Testis (tissue), 5 donors: ENCODE measurements at regions of chr7 and their contacts with region 1.

Region 1: DNA sequence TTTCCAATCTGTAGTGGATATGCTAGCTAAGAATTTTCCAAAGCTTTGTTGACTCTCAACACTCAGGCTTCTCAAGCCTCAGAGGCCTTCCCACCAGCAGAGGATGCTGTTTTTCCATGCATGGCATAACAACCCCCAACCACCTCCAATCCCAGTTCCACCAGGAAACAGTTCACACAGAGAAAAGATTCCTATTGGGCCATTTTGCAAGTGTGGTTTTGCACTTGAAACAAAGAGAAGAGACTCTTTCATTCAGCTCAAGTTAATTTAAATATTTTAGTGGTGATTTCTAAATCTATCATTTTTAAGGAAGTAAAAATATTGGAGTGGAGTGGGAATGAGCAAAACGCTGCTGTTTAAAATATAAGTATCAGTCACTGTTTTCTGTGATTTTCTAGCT is 105.6 kb upstream of the COL1A2 start:
- DNase-seq: peak; percentile 87
- H3K4me3 ChIP-seq: no peak overlapping the region
- H3K27ac ChIP-seq: no peak overlapping the region
- H3K4me1 ChIP-seq: no peaks in the 10 kb centered on the region
- H3K27me3 ChIP-seq: no peaks in the 10 kb centered on the region
- CTCF ChIP-seq: peak; percentile 78 to 84 (median 82)
- POLR2A ChIP-seq: no peak

Region 2: DNA sequence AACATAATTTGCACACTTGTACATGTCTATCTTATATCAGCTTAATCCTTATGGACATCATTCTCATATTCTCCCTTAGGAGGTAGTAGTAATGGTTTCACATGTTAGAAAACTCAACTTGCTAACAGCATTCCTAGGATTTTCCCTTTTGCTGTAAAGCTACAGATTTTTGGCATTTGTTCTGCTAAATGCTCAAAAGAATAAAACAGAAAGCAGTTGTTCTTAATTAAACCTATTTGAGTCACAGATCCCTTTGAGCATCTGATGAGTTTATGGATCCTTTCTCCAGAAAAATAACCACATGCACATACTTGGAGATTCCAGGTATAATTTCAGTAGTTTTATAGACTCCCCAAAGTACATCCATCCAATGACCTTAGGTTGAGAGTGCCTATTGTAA is 162.0 kb before region 1 on chr7:
- intact Hi-C with region 1: no loop called
- DNase-seq: no peak
- H3K4me3 ChIP-seq: no peak overlapping the region
- H3K27ac ChIP-seq: no peak overlapping the region
- H3K4me1 ChIP-seq: no peaks in the 10 kb centered on the region
- H3K27me3 ChIP-seq: no peaks in the 10 kb centered on the region
- CTCF ChIP-seq: no peak
- POLR2A ChIP-seq: no peak

Region 3: DNA sequence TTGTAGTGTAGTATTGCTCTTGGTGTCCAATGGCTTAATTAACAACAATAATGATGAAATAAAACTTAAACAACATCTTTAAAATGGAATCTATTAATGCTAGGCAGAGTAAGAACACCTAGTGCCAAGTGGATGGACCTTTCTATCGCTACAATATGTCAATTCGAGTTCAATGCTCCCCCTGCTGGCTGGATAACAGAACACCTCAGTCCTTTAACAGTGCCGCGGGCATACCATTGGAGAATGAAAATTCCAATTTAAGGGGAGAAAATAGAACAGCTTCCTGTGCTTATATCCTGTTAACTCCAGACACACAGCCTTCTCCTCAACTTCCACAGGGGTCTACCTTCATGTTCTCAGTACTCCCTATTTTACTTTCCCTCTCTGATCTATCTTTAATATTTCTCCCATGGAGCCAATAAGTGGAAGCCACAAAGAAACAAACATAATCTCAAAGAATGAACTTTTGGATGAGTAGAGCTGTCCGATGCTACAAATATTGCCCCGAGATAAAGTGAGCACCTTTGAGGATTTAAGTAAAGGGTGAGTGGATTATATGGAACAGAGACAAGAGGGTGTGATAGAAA is 147.0 kb after region 1 on chr7:
- intact Hi-C with region 1: loop called (anchors 10 kb)
- DNase-seq: peak; percentile 87
- H3K4me3 ChIP-seq: no peak overlapping the region
- H3K27ac ChIP-seq: no peak overlapping the region
- H3K4me1 ChIP-seq: no peaks in the 10 kb centered on the region
- H3K27me3 ChIP-seq: no peaks in the 10 kb centered on the region
- CTCF ChIP-seq: peak; percentile 75 to 93 (median 85)
- POLR2A ChIP-seq: no peak